ENCODE measurements at regions of chr17 and their contacts with region 1.

Region 1: DNA sequence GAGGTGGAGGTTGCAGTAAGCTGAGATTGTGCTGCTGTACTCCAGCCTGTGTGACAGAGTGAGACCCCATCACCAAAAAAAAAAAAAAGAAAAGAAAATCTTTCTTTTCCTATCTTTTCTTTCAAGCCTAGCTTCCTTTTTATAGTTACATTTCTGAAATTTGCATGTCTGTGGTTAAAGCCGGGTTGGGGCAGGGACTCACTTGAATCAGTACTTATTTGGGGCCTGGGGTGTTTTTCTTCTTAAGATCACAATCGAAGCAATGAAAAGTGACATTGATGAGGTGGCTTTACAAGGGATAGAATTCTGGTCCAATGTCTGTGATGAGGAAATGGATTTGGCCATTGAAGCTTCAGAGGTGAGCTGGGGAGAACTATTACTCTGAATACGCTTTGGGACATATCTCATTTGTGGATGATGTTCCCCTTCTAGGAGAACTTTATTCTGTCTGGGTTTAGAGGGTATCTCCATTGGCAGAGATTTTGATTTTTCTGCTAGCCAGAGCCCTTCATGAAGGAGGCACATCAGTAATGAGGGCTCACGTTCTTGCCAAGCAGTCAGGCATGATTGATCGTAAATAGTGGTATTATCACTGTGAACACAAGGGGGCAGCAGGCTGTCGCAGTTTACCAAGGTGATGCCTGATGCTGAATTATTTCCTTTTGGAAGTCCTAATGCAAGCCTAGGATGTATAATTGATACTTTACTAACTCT is 14.3 kb downstream of the KPNB1 start:
- DNase-seq: no peak
- H3K4me3 ChIP-seq: no peak overlapping the region
- H3K27ac ChIP-seq: peak overlapping the region in 1 of 4 donors; percentile 57
- H3K4me1 ChIP-seq: peaks cover 0 to 14% (median 10%) of the 10 kb centered on the region in 4 donors
- H3K27me3 ChIP-seq: no peaks in the 10 kb centered on the region
- CTCF ChIP-seq: peak; percentile 58 to 74 (median 63)
- EP300 ChIP-seq: no peak
- POLR2A ChIP-seq: no peak

Region 2: GRCh38 chr17:47470836-47471235 is 193.2 kb before region 1 on chr17:
- intact Hi-C with region 1: no loop called
- DNase-seq: no peak
- H3K4me3 ChIP-seq: no peak overlapping the region
- H3K27ac ChIP-seq: no peak overlapping the region
- H3K4me1 ChIP-seq: no peaks in the 10 kb centered on the region
- H3K27me3 ChIP-seq: no peaks in the 10 kb centered on the region
- CTCF ChIP-seq: no peak
- EP300 ChIP-seq: no peak
- POLR2A ChIP-seq: no peak

Region 3: GRCh38 chr17:47802341-47803022 is 138.4 kb after region 1 on chr17:
- intact Hi-C with region 1: loop called (anchors 10 kb)
- DNase-seq: no peak
- H3K4me3 ChIP-seq: no peak overlapping the region
- H3K27ac ChIP-seq: no peak overlapping the region
- H3K4me1 ChIP-seq: no peaks in the 10 kb centered on the region
- H3K27me3 ChIP-seq: peaks cover 0 to 25% (median 0%) of the 10 kb centered on the region in 4 donors
- CTCF ChIP-seq: peak; percentile 41 to 61 (median 42)
- EP300 ChIP-seq: no peak
- POLR2A ChIP-seq: no peak

Region 4: GRCh38 chr17:47935961-47936360 is 271.9 kb after region 1 on chr17:
- intact Hi-C with region 1: no loop called
- DNase-seq: no peak
- H3K4me3 ChIP-seq: no peak overlapping the region
- H3K27ac ChIP-seq: no peak overlapping the region
- H3K4me1 ChIP-seq: peaks cover 0 to 8% (median 7%) of the 10 kb centered on the region in 4 donors
- H3K27me3 ChIP-seq: no peaks in the 10 kb centered on the region
- CTCF ChIP-seq: no peak
- EP300 ChIP-seq: no peak
- POLR2A ChIP-seq: no peak

Measured in esophagus muscularis mucosa (tissue), 4 donors.